ENCODE measurements at regions of chr1 and their contacts with region 1.

Region 1: DNA sequence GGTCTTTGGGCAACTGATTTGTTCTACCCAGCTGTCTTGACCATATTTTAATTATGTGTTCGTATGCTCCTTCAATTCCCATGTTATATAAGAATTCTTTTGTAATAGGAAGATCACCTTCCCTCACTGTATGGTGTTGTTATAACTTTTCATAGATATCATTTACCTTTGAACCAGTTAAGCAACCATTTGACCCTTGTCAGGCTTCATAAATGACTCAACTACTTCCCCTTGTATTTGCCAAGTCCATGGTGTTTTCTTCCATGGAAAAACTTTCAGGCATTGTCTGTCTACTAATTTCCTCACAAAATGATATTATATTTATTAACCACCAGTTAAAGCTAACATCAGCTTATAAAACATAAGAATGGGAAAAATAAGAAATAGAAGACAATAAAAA is 5.1 kb downstream of the BPNT1 start:
- DNase-seq: no peak
- ATAC-seq: no peak
- H3K4me3 ChIP-seq: no peak overlapping the region
- H3K4me3 Mint-ChIP-seq: no peak overlapping the region
- H3K27ac ChIP-seq: no peak overlapping the region
- H3K27ac Mint-ChIP-seq: no peak overlapping the region
- H3K4me1 ChIP-seq: peaks cover 6% of the 10 kb centered on the region
- H3K4me1 Mint-ChIP-seq: peaks cover 24% of the 10 kb centered on the region
- H3K27me3 ChIP-seq: no peaks in the 10 kb centered on the region
- H3K27me3 Mint-ChIP-seq: no peaks in the 10 kb centered on the region
- CTCF ChIP-seq: no peak

Region 2: DNA sequence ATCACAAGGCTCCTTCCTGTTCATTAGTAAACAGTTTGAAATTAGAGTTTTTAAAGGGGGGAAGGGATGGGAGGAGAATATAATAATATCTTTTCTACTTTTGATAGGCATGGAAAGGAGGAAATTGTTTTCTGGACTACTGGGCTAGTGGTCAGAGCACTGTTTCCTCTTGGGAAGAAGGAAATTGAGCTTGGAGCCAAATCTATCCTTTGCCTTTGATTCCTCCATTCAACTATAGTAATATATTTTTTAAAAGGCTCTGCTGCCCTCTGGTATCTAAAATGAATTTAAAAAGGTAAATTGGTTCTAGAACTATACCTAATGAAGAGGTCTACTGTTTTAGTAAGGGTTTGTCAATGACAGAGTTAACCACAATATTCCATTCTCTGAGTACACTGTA is 15.4 kb after region 1 on chr1:
- CTCF ChIA-PET with region 1: interaction called, 4 read pairs
- POLR2A ChIA-PET with region 1: no interaction called
- intact Hi-C with region 1: loop called (anchors 1 to 2 kb)
- DNase-seq: no peak
- ATAC-seq: no peak
- H3K4me3 ChIP-seq: no peak overlapping the region
- H3K4me3 Mint-ChIP-seq: no peak overlapping the region
- H3K27ac ChIP-seq: no peak overlapping the region
- H3K27ac Mint-ChIP-seq: no peak overlapping the region
- H3K4me1 ChIP-seq: peaks cover 12% of the 10 kb centered on the region
- H3K4me1 Mint-ChIP-seq: peaks cover 30% of the 10 kb centered on the region
- H3K27me3 ChIP-seq: no peaks in the 10 kb centered on the region
- H3K27me3 Mint-ChIP-seq: no peaks in the 10 kb centered on the region
- CTCF ChIP-seq: no peak

Measured in CD8-positive, alpha-beta T cell (primary cell).